Right cardiac atrium (tissue), 5 donors: ENCODE measurements at regions of chr3 and their contacts with region 1.

Region 1: GRCh38 chr3:51974963-51975851 is at the start of gene ABHD14A:
- DNase-seq: peak; percentile 79 to 93 (median 92)
- ATAC-seq: peak; percentile 80 to 81
- H3K4me3 ChIP-seq: peak within 1 kb of the TSS; percentile 67
- H3K27ac ChIP-seq: peak within 1 kb of the TSS; percentile 59
- H3K4me1 ChIP-seq: peaks cover 10% of the 10 kb centered on the region
- H3K27me3 ChIP-seq: no peaks in the 10 kb centered on the region
- total RNA-seq, gene ABHD14A: 19.9 to 25.9 (median 23.2) TPM

Region 2: GRCh38 chr3:51941798-51942602 is 33.2 kb before region 1 on chr3 and contains the starts of genes PARP3 and RRP9:
- intact Hi-C with region 1: loop called in 1 of 4 experiments (anchors 2 kb)
- DNase-seq: peak; percentile 100
- ATAC-seq: peak; percentile 95 to 96
- H3K4me3 ChIP-seq: peak within 1 kb of the TSS; percentile 62
- H3K27ac ChIP-seq: peak within 1 kb of the TSS; percentile 95
- H3K4me1 ChIP-seq: peaks cover 2% of the 10 kb centered on the region
- H3K27me3 ChIP-seq: no peaks in the 10 kb centered on the region
- total RNA-seq, gene PARP3: 11.6 to 17.4 (median 12.7) TPM
- total RNA-seq, gene RRP9: 7.0 to 13.9 (median 9.1) TPM

Region 3: DNA sequence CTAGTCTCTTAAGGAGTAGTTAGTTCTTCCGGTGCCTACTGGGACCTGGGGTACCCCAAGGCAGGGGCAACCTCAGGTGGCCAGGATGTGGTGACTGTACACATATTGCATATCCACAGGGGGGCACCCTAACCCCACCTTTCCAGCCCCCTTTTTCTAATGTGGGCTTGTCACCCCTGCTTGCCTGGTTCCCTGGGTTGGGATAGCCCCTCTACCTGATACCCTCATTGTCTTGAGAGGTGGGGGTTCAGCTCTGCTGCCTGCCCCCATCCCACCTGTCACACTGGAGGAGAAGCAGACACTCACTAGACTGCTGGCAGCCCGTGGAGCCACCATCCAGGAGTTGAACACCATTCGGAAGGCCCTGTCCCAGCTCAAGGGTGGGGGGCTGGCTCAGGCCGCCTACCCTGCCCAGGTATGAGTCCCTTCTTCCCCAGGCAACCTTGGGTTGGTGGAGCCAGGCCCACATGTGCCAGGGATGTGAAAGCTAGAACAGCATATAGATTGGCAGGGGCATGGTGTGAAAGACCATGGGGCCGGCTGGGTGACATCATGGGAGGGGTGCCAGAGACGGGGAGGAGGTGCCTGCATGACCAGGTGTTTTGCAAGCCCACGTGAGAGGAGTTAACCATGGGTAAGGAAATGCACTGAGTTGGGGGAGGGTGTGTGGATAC is 316.4 kb after region 1 on chr3:
- intact Hi-C with region 1: no loop called
- DNase-seq: peak in 2 of 3 donors; percentile 11 to 46
- ATAC-seq: no peak
- H3K4me3 ChIP-seq: no peak overlapping the region
- H3K27ac ChIP-seq: no peak overlapping the region
- H3K4me1 ChIP-seq: peaks cover 4% of the 10 kb centered on the region
- H3K27me3 ChIP-seq: no peaks in the 10 kb centered on the region